ENCODE measurements at regions of chr4 and their contacts with region 1.

Region 1: GRCh38 chr4:139633661-139634060 is 32.0 kb upstream of the MGST2 start:
- DNase-seq: peak; percentile 41 to 53
- H3K4me3 ChIP-seq: peak overlapping the region; percentile 24 to 46 (median 35)
- H3K27ac ChIP-seq: peak overlapping the region in 1 of 5 donors; percentile 51
- H3K4me1 ChIP-seq: peaks cover 0 to 8% (median 3%) of the 10 kb centered on the region in 4 donors
- H3K27me3 ChIP-seq: no peaks in the 10 kb centered on the region
- CTCF ChIP-seq: peak in 5 of 7 experiments; percentile 24 to 53 (median 41)
- EP300 ChIP-seq: no peak
- POLR2A ChIP-seq: no peak

Region 2: DNA sequence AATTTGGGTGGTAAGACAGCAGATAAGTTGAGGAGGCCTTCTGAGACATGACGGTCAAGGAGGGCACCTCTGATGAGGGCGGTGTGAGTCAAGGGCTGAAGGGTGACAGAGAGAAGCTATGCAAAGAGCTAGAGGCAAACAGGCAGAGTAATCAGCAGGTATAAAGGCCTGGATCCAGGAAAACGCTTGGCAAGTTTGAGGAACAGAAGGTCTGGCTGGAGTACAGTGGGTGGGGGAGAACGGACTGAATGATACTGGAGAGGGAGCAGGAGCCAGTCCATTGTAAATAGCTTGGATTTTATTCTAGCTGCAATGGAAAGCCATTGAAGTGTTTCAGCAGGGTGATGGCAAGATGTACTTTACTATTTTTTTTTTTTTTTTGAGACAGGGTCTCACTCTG is 140.5 kb before region 1 on chr4:
- intact Hi-C with region 1: loop called (anchors 10 kb)
- DNase-seq: no peak
- H3K4me3 ChIP-seq: no peak overlapping the region
- H3K27ac ChIP-seq: no peak overlapping the region
- H3K4me1 ChIP-seq: peaks cover 0 to 22% (median 7%) of the 10 kb centered on the region in 4 donors
- H3K27me3 ChIP-seq: no peaks in the 10 kb centered on the region
- CTCF ChIP-seq: no peak
- EP300 ChIP-seq: no peak
- POLR2A ChIP-seq: no peak